A673 (cell line): ENCODE measurements at regions of chr11 and their contacts with region 1.

Region 1: GRCh38 chr11:13955971-13956421 is 6.5 kb upstream of the SPON1 start:
- DNase-seq: peak; percentile 45
- H3K4me3 ChIP-seq: no peak overlapping the region
- H3K27ac ChIP-seq: no peak overlapping the region
- H3K4me1 ChIP-seq: no peaks in the 10 kb centered on the region
- H3K27me3 ChIP-seq: peaks cover 72% of the 10 kb centered on the region
- CTCF ChIP-seq: peak; percentile 80

Region 2: DNA sequence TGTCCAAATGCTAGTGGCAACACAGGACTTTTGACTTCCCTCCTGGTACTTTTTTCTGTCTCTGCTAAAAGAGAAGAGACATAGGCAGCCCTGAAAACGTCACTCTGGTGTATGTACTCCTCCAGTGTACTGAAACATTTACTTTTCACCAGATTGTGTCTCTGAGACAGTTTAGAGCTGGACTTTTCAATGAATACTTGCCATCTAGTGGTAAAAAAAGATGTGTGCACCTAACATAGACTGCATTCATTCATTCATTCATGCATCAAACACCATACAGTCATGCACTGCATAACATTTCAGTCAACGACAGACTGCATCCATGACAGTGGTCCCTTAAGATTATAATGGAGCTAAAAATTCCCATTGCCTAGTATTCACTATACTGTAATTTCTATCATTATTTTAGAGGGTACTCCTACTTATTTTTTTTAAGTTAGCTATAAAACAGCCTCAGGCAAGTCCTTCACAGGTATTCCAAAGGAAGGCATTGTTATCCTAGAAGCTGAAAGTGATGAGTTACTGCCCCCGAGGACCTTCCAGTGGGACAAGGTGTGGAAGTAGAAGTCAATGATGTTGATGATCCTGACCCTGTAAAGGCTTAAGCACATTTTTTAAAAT is 192.8 kb after region 1 on chr11:
- CTCF ChIA-PET with region 1: no interaction called
- POLR2A ChIA-PET with region 1: no interaction called
- intact Hi-C with region 1: loop called (anchors 2 kb)
- DNase-seq: peak; percentile 25
- H3K4me3 ChIP-seq: no peak overlapping the region
- H3K27ac ChIP-seq: no peak overlapping the region
- H3K4me1 ChIP-seq: no peaks in the 10 kb centered on the region
- H3K27me3 ChIP-seq: peaks cover 12% of the 10 kb centered on the region
- CTCF ChIP-seq: peak; percentile 56; the same call in 1 of the 2 replicates

Region 3: DNA sequence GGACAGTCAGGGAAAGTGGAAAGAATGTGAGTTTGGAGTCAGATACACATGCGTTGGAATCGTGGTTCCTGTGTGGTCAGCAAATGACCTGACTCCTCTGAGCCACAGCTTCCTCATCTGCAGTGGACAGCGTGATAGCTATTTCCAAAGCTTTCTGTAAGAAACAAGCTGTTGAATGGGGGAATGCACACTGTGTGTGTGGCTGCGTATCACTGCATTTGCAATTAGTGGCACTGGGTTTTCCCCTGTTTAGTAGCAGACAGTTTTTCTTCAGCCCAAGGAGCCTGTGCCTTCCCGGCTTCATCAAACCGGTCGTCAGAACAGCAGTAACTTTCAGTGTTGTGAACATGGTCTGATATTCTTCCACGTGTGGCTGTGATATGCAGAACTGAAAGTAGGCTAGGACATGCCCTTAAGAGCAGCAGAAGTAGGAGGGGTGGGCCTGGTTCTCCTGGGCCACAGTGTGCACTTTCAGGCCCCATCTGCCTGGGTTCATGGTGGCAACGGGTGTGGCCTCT is 281.5 kb after region 1 on chr11:
- CTCF ChIA-PET with region 1: no interaction called
- POLR2A ChIA-PET with region 1: no interaction called
- intact Hi-C with region 1: no loop called
- DNase-seq: no peak
- H3K4me3 ChIP-seq: no peak overlapping the region
- H3K27ac ChIP-seq: no peak overlapping the region
- H3K4me1 ChIP-seq: no peaks in the 10 kb centered on the region
- H3K27me3 ChIP-seq: peaks cover 16% of the 10 kb centered on the region
- CTCF ChIP-seq: no peak

Region 4: DNA sequence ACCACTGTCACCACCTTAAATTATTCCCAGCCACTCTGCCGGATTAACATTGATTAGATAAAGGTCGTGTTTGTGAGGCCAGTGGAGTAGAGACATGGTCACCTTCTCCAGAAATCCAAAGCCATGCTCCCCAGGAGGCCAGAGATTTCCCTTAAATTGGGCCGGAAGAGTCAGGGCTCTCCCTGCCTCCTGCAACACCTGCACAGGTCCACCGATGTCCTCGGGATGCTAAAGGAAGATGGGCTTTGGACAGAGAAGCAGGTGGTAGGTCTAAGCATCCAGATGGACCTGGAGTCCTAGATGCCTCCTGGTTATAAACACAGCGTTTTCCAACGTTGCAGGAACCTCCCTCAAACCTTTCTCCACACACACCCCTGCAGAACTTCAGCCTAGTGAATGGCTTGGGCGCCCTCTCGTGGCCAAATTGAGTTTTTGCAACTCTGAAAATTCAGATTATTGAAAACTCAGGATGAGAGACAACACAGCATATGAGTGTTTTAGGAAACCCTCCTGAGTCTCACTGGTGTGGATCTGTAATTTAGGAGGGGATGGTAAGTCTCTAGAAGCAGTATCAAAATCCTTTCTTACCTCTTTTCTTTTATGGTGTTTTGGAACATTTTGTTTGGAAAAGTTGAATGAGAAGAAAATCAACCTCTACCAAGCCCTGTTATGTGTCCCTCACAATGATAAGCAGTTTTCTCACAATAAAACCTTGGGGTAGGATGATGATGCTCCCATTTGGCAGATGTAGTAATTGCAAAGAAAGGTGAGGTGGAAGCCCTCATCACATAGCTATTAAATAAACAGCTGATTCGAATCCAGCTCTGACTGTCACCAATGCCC is 293.3 kb after region 1 on chr11:
- CTCF ChIA-PET with region 1: no interaction called
- POLR2A ChIA-PET with region 1: no interaction called
- intact Hi-C with region 1: loop called (anchors 1 kb)
- DNase-seq: peak; percentile 71
- H3K4me3 ChIP-seq: no peak overlapping the region
- H3K27ac ChIP-seq: no peak overlapping the region
- H3K4me1 ChIP-seq: no peaks in the 10 kb centered on the region
- H3K27me3 ChIP-seq: peaks cover 7% of the 10 kb centered on the region
- CTCF ChIP-seq: peak; percentile 80

Region 5: GRCh38 chr11:14454861-14455632 is 499.1 kb after region 1 on chr11:
- CTCF ChIA-PET with region 1: no interaction called
- POLR2A ChIA-PET with region 1: no interaction called
- intact Hi-C with region 1: loop called (anchors 10 kb)
- DNase-seq: peak; percentile 42
- H3K4me3 ChIP-seq: no peak overlapping the region
- H3K27ac ChIP-seq: no peak overlapping the region
- H3K4me1 ChIP-seq: no peaks in the 10 kb centered on the region
- H3K27me3 ChIP-seq: no peaks in the 10 kb centered on the region
- CTCF ChIP-seq: peak; percentile 74